ENCODE measurements at regions of chrX and their contacts with region 1.

Region 1: DNA sequence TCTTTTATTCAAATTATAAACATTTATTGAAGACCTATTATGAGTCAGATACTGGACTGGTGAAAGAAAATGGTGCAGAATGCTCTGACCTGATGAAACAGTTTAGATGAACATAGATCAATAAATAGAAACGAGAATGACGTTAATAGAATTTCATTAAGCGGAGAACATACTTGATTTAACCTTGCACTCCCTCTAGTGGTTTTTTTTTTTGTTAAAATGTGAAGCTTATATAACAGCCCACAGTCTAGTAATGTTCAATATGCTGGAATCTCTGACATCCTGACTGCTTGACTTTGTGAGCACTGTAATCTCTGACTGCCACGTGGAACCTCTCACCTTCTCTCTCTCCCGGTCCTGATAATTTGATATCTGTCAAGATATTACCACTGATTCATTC is 32.3 kb downstream of the HDAC8 start:
- DNase-seq: peak; percentile 14
- H3K4me3 Mint-ChIP-seq: no peak overlapping the region
- H3K27ac Mint-ChIP-seq: no peak overlapping the region
- H3K4me1 Mint-ChIP-seq: no peaks in the 10 kb centered on the region
- H3K27me3 Mint-ChIP-seq: peaks cover 56% of the 10 kb centered on the region
- CTCF ChIP-seq: peak; percentile 27

Region 2: DNA sequence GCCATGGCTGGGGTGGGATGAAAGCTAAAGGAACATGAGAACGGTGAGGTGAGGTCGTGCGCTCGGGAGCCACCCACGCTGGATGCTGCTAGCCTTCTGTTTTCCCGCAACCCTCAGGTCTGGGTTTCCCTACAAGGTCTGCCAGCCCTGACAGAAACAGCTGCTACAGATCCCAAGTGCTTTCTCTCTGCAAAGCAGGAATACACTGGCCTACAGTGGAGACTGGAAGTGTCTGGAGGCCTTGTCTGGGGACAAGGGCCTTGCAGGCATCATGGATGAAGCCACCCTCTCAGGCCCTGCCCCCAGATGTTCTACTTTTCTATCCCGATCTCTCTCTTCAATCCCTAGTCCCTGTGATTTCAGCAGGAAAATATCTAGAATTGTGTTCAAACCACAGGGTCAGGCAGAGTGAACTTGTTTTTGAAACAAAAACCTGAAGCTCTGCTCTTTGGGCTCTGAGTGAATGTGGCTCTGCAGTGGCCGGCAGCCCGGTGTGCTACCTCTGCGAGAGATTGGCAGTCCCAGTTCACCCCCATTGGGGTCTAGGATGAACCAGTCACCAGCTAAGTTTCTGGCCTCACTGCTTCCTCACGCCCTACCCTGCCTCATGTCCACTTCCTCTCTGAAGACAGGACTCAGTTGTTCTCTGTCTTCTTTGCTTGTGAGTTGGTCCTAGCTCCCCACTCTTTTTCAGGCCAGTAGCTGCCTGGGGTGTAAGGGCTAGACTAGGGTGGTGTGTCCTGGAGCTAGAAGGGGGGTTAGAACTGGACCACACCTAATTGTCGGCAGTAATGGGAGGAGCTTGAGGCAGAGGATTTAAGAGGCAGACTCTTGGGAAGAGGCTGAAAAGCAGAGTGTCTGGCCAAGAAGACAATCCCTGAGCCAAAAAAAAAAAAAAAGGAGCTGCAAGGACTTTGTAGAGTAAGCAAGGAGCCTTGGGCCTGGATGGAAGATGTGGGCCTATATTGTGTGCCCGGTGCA is 498.2 kb before region 1 on chrX:
- CTCF ChIA-PET with region 1: no interaction called
- POLR2A ChIA-PET with region 1: no interaction called
- intact Hi-C with region 1: no loop called
- DNase-seq: no peak
- H3K4me3 Mint-ChIP-seq: no peak overlapping the region
- H3K27ac Mint-ChIP-seq: no peak overlapping the region
- H3K4me1 Mint-ChIP-seq: no peaks in the 10 kb centered on the region
- H3K27me3 Mint-ChIP-seq: peaks cover 88% of the 10 kb centered on the region
- CTCF ChIP-seq: no peak

Region 3: DNA sequence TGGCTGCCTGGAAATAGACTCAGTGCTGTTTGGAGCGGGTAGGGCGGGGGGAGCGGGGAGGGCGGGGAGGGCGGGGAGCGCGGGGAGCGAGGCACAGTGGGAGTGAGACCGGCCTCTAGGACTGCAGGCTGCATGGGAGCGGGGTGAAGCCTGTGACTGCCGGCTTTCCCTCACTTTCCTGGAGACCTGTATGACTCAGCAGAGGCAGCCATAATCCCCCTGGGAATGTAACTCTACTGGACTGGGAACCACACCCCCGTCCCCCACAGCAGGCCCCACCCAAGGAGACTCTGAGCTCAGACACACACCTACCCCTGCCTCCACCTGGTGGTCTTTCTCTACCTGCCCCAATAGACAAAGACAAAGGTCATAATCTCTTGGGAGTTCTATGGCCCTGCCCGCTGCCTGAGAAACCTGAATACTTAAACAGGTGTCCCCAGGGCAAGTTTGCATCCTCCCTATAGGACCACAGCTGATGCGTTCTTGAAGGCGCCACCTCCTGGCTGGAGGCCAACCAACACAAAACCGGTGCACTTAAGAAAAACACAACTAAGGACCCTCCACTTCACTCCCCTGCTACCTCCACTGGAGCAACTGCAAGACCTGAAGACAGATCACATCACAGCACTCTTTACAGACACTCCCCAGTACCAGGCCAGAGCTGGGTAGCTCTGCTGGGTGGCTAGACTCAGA is 14.3 kb after region 1 on chrX:
- CTCF ChIA-PET with region 1: interaction called, 11 read pairs
- POLR2A ChIA-PET with region 1: no interaction called
- intact Hi-C with region 1: no loop called
- DNase-seq: peak; percentile 78
- H3K4me3 Mint-ChIP-seq: no peak overlapping the region
- H3K27ac Mint-ChIP-seq: no peak overlapping the region
- H3K4me1 Mint-ChIP-seq: peaks cover 6% of the 10 kb centered on the region
- H3K27me3 Mint-ChIP-seq: peaks cover 68% of the 10 kb centered on the region
- CTCF ChIP-seq: no peak